Spleen (tissue), 13 donors: ENCODE measurements at regions of chr12 and their contacts with region 1.

Region 1: DNA sequence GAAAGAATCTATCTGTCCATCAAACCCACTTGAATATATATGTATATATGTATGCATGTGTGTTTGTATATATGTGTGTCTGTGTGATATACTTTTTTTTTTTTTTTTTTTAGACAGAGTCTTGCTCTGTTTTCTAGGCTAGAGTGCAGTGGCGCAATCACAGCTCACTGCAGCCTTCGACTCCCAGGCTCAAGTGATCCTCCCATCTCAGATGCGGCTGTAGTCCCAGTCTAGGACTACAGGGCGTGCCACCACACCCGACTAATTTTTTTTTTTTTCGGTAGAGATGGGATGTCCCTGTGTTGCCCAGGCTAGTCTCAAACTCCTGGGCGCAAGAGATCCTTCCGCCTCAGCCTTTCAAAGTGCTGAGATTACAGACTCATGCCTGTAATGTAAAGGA is 13.0 kb upstream of the APOBEC1 start:
- DNase-seq: no peak
- H3K4me3 ChIP-seq: no peak overlapping the region
- H3K27ac ChIP-seq: no peak overlapping the region
- H3K4me1 ChIP-seq: peaks cover 0 to 35% (median 22%) of the 10 kb centered on the region in 6 donors
- H3K27me3 ChIP-seq: peaks cover 0 to 7% (median 0%) of the 10 kb centered on the region in 7 donors
- CTCF ChIP-seq: no peak
- POLR2A ChIP-seq: no peak

Region 2: DNA sequence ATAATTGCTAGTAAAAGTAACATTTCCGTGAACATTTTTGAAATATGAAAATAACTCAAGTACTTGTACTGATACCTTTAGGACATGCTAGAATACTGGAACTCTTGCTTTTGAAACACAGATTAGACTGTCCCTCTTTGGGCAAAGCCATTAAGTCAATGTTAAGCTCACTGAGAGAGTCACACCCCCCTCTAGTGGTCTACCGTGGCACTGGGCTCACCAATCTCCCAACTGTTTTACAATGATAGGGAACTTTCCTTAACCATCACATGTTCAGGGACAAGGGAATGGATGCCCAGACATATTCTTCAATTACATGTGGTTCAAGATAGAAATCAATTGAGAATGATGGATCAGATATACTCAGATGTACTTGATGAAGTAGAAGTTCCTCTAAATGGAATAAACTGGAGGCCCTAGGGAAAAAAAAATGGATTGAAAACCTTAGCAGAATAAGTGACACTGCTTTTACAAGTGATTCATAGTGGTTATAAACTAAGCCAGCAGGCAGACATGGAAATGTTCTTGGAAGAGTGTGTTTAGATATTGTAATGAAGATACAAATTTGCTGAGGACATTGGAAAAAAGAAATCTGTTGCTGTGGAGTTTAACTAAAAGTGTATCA is 128.2 kb after region 1 on chr12:
- intact Hi-C with region 1: loop called (anchors 2 kb)
- DNase-seq: peak; percentile 77
- H3K4me3 ChIP-seq: no peak overlapping the region
- H3K27ac ChIP-seq: no peak overlapping the region
- H3K4me1 ChIP-seq: peaks cover 0 to 6% (median 0%) of the 10 kb centered on the region in 6 donors
- H3K27me3 ChIP-seq: peaks cover 0 to 23% (median 0%) of the 10 kb centered on the region in 7 donors
- CTCF ChIP-seq: peak; percentile 57 to 90 (median 84)
- POLR2A ChIP-seq: no peak